CD8-positive, alpha-beta T cell (primary cell): ENCODE measurements at regions of chr7 and their contacts with region 1.

Region 1: DNA sequence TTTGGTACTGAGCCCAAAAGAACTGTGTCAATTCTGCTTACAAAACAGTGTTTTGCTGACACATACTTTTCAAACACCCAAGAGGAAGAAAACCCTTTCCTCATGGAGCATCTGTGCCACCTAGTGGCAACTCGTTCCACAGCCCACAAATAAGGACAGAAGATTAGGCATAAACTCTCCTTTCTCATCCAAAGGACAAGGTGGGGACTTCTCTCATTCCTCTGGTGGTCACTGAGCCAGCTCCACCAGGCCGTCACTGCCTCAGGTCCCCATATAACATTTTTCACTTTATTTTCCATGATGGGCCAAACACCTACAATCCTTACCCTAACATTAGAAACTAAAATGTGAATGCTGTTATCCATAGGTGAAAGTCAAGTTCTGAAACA is 76.9 kb downstream of the RNF216 start:
- DNase-seq: peak; percentile 53 to 87 (median 73)
- ATAC-seq: peak; percentile 18
- H3K4me3 ChIP-seq: no peak overlapping the region
- H3K4me3 Mint-ChIP-seq: no peak overlapping the region
- H3K27ac ChIP-seq: no peak overlapping the region
- H3K27ac Mint-ChIP-seq: no peak overlapping the region
- H3K4me1 ChIP-seq: peaks cover 27% of the 10 kb centered on the region
- H3K4me1 Mint-ChIP-seq: peaks cover 34% of the 10 kb centered on the region
- H3K27me3 ChIP-seq: no peaks in the 10 kb centered on the region
- H3K27me3 Mint-ChIP-seq: no peaks in the 10 kb centered on the region
- CTCF ChIP-seq: peak; percentile 87

Region 2: GRCh38 chr7:5363729-5364128 is 340.8 kb before region 1 on chr7:
- CTCF ChIA-PET with region 1: no interaction called
- POLR2A ChIA-PET with region 1: no interaction called
- intact Hi-C with region 1: loop called (anchors 1 to 10 kb)
- DNase-seq: no peak
- ATAC-seq: no peak
- H3K4me3 ChIP-seq: no peak overlapping the region
- H3K4me3 Mint-ChIP-seq: no peak overlapping the region
- H3K27ac ChIP-seq: no peak overlapping the region
- H3K27ac Mint-ChIP-seq: no peak overlapping the region
- H3K4me1 ChIP-seq: no peaks in the 10 kb centered on the region
- H3K4me1 Mint-ChIP-seq: peaks cover 20% of the 10 kb centered on the region
- H3K27me3 ChIP-seq: no peaks in the 10 kb centered on the region
- H3K27me3 Mint-ChIP-seq: no peaks in the 10 kb centered on the region
- CTCF ChIP-seq: no peak

Region 3: GRCh38 chr7:5567790-5568189 is 136.7 kb before region 1 on chr7:
- CTCF ChIA-PET with region 1: interaction called, 10 read pairs
- POLR2A ChIA-PET with region 1: no interaction called
- intact Hi-C with region 1: no loop called
- DNase-seq: peak in 2 of 9 experiments; percentile 31 to 56
- ATAC-seq: no peak
- H3K4me3 ChIP-seq: no peak overlapping the region
- H3K4me3 Mint-ChIP-seq: no peak overlapping the region
- H3K27ac ChIP-seq: no peak overlapping the region
- H3K27ac Mint-ChIP-seq: no peak overlapping the region
- H3K4me1 ChIP-seq: peaks cover 30% of the 10 kb centered on the region
- H3K4me1 Mint-ChIP-seq: peaks cover 26% of the 10 kb centered on the region
- H3K27me3 ChIP-seq: peaks cover 0 to 15% of the 10 kb centered on the region in 2 experiments
- H3K27me3 Mint-ChIP-seq: no peaks in the 10 kb centered on the region
- CTCF ChIP-seq: no peak

Region 4: DNA sequence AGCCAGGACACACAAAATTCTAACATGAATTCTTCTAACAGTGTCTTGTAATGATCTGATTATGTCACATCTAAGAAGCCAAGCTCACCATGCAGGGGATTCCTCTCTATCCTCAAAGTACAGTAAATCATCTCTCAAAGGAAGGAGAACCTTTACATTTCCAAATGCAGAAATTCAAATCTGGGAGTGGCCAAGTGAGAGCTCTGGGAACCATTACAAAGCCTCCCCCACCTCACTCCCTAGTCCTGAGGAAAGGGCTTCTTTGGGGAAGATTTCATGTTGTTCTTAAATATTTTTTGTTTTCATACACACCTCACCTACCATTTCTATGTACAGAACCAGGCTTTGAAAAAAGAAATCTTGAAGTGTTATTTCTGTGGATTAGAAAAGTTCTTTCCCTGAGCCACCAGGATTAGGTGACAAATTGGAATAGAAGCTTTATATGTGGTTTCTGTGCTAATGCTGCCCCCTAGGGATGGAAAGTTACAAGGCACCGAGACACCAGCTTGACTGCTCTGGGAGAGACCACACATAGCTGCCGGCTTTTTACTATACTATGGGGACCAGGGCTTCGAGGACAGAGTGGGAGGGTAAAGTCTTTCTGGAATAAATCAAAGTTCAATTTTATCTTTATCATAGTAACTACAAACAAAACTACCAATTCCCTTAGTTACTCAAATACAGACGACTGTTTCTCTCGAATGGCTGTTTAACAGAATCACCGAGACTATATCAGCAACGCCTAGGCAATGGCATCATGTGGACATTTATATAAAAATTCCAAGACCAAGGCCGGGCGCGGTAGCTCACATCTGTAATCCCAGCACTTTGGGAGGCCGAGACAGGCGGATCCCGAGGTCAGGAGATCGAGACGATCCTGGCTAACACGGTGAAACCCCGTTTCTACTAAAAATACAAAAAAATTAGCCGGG is 39.2 kb before region 1 on chr7:
- CTCF ChIA-PET with region 1: interaction called, 25 read pairs
- POLR2A ChIA-PET with region 1: no interaction called
- intact Hi-C with region 1: loop called (anchors 1 kb)
- DNase-seq: peak; percentile 25 to 82 (median 66)
- ATAC-seq: peak; percentile 80
- H3K4me3 ChIP-seq: no peak overlapping the region
- H3K4me3 Mint-ChIP-seq: no peak overlapping the region
- H3K27ac ChIP-seq: no peak overlapping the region
- H3K27ac Mint-ChIP-seq: no peak overlapping the region
- H3K4me1 ChIP-seq: peaks cover 15% of the 10 kb centered on the region
- H3K4me1 Mint-ChIP-seq: peaks cover 24% of the 10 kb centered on the region
- H3K27me3 ChIP-seq: no peaks in the 10 kb centered on the region
- H3K27me3 Mint-ChIP-seq: no peaks in the 10 kb centered on the region
- CTCF ChIP-seq: peak; percentile 92

Region 5: GRCh38 chr7:5689118-5689517 is 15.4 kb before region 1 on chr7:
- CTCF ChIA-PET with region 1: interaction called, 25 read pairs
- POLR2A ChIA-PET with region 1: interaction called, 8 read pairs
- intact Hi-C with region 1: loop called in 1 of 2 experiments (anchors 1 kb)
- DNase-seq: peak in 6 of 9 experiments; percentile 26 to 82 (median 58)
- ATAC-seq: peak; percentile 62
- H3K4me3 ChIP-seq: peak overlapping the region in 1 of 2 experiments; percentile 29
- H3K4me3 Mint-ChIP-seq: peak overlapping the region; percentile 73
- H3K27ac ChIP-seq: peak overlapping the region; percentile 42 to 61
- H3K27ac Mint-ChIP-seq: peak overlapping the region; percentile 94
- H3K4me1 ChIP-seq: peaks cover 91% of the 10 kb centered on the region
- H3K4me1 Mint-ChIP-seq: peaks cover 88% of the 10 kb centered on the region
- H3K27me3 ChIP-seq: no peaks in the 10 kb centered on the region
- H3K27me3 Mint-ChIP-seq: no peaks in the 10 kb centered on the region
- CTCF ChIP-seq: no peak

Region 6: DNA sequence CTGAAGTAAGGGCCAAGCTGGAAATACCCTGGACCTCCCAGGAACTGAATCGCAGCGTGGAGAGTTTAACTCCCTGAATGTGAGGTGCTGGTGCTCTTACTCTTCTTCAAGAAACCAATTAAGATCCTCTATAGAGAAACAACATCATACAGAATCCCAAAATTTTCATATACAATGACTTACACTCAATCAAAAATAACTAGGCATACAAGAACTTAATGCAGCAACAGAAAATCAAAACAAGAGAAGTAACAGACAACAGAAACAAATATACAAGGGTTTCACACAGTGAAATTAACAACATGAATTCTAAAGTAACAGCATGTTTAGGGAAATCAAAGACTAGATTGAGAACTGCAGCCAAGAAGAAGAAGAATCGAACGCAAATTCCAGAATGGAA is 39.3 kb after region 1 on chr7:
- CTCF ChIA-PET with region 1: no interaction called
- POLR2A ChIA-PET with region 1: no interaction called
- intact Hi-C with region 1: no loop called
- DNase-seq: no peak
- ATAC-seq: no peak
- H3K4me3 ChIP-seq: no peak overlapping the region
- H3K4me3 Mint-ChIP-seq: no peak overlapping the region
- H3K27ac ChIP-seq: no peak overlapping the region
- H3K27ac Mint-ChIP-seq: no peak overlapping the region
- H3K4me1 ChIP-seq: no peaks in the 10 kb centered on the region
- H3K4me1 Mint-ChIP-seq: peaks cover 14% of the 10 kb centered on the region
- H3K27me3 ChIP-seq: no peaks in the 10 kb centered on the region
- H3K27me3 Mint-ChIP-seq: no peaks in the 10 kb centered on the region
- CTCF ChIP-seq: no peak

Region 7: DNA sequence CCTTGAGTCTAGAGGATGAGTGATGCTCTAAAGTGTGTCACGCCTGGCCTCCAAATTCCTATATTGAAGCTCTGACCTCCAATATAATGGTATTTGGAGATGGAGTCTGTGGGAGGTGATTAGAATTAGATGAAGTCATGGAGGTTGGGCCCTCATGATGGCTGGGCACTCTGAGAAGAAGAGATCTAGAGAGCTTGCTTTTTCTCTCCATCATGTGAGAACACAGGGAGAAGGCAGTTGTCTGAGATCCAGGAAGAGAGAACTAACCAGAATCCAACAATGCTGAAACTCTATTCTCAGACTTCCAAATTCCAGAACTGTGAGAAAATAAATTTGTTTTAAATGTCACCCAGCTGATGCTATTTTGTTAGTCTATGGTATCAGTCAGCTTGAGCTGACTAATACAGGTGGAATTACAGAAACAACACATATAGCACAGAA is 61.8 kb after region 1 on chr7:
- CTCF ChIA-PET with region 1: no interaction called
- POLR2A ChIA-PET with region 1: no interaction called
- intact Hi-C with region 1: no loop called
- DNase-seq: no peak
- ATAC-seq: no peak
- H3K4me3 ChIP-seq: no peak overlapping the region
- H3K4me3 Mint-ChIP-seq: no peak overlapping the region
- H3K27ac ChIP-seq: no peak overlapping the region
- H3K27ac Mint-ChIP-seq: peak overlapping the region; percentile 32
- H3K4me1 ChIP-seq: peaks cover 2% of the 10 kb centered on the region
- H3K4me1 Mint-ChIP-seq: peaks cover 50% of the 10 kb centered on the region
- H3K27me3 ChIP-seq: no peaks in the 10 kb centered on the region
- H3K27me3 Mint-ChIP-seq: no peaks in the 10 kb centered on the region
- CTCF ChIP-seq: no peak